Calu3 (cell line): ENCODE measurements at regions of chr20 and their contacts with region 1.

Region 1: GRCh38 chr20:56574531-56575142 is 41.6 kb downstream of the FAM209B start:
- DNase-seq: no peak
- H3K4me3 Mint-ChIP-seq: no peak overlapping the region
- H3K27ac Mint-ChIP-seq: no peak overlapping the region
- H3K4me1 Mint-ChIP-seq: no peaks in the 10 kb centered on the region
- H3K27me3 Mint-ChIP-seq: peaks cover 39% of the 10 kb centered on the region
- CTCF ChIP-seq: no peak

Region 2: DNA sequence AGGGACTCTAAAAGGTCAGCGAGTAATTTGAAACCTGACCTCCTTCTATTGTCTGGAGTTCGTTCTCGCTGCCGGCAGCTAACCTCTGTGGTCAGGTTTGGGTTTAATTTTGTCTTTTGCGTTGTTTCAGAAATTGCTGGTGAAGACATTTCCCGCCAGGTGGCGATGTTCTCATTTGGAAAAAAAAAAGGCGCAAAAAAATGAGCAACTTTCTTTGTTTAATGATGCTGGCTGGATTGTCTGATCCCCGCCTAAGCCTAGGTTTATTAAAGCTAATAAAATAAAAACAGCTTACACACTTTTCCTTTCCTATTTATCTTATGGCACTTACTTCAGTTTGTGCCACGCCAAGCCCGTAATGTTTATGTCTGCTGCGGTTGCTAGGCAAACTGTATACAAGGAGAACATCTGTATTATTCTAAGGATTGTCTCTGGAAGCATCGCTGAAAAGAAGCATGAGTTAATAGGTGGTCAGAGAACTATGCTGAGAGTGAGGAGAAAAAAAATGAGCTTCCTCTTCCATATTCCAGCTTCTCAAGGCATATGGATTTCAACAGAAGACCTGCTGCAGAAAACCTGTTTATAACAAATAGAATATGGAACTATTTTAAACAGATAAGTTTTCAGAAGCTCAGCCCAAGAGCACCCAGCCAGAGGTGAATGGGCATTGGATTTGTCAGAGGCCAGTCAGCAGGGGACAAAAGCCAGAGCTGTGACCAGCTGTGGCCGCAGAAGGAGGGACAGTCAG is 1893.6 kb before region 1 on chr20:
- CTCF ChIA-PET with region 1: no interaction called
- intact Hi-C with region 1: loop called (anchors 10 kb)
- DNase-seq: peak; percentile 66
- H3K4me3 Mint-ChIP-seq: no peak overlapping the region
- H3K27ac Mint-ChIP-seq: no peak overlapping the region
- H3K4me1 Mint-ChIP-seq: no peaks in the 10 kb centered on the region
- H3K27me3 Mint-ChIP-seq: peaks cover 70% of the 10 kb centered on the region
- CTCF ChIP-seq: peak; percentile 84

Region 3: GRCh38 chr20:56400090-56400542 is 174.5 kb before region 1 on chr20:
- CTCF ChIA-PET with region 1: no interaction called
- intact Hi-C with region 1: loop called (anchors 2 kb)
- DNase-seq: peak; percentile 66
- H3K4me3 Mint-ChIP-seq: no peak overlapping the region
- H3K27ac Mint-ChIP-seq: no peak overlapping the region
- H3K4me1 Mint-ChIP-seq: peaks cover 3% of the 10 kb centered on the region
- H3K27me3 Mint-ChIP-seq: no peaks in the 10 kb centered on the region
- CTCF ChIP-seq: peak; percentile 48

Region 4: GRCh38 chr20:56629670-56630478 is 55.2 kb after region 1 on chr20:
- CTCF ChIA-PET with region 1: no interaction called
- intact Hi-C with region 1: loop called (anchors 10 kb)
- DNase-seq: peak; percentile 84
- H3K4me3 Mint-ChIP-seq: peak overlapping the region; percentile 81
- H3K27ac Mint-ChIP-seq: peak overlapping the region; percentile 83
- H3K4me1 Mint-ChIP-seq: no peaks in the 10 kb centered on the region
- H3K27me3 Mint-ChIP-seq: no peaks in the 10 kb centered on the region
- CTCF ChIP-seq: no peak